ENCODE measurements at regions of chr14 and their contacts with region 1.

Region 1: DNA sequence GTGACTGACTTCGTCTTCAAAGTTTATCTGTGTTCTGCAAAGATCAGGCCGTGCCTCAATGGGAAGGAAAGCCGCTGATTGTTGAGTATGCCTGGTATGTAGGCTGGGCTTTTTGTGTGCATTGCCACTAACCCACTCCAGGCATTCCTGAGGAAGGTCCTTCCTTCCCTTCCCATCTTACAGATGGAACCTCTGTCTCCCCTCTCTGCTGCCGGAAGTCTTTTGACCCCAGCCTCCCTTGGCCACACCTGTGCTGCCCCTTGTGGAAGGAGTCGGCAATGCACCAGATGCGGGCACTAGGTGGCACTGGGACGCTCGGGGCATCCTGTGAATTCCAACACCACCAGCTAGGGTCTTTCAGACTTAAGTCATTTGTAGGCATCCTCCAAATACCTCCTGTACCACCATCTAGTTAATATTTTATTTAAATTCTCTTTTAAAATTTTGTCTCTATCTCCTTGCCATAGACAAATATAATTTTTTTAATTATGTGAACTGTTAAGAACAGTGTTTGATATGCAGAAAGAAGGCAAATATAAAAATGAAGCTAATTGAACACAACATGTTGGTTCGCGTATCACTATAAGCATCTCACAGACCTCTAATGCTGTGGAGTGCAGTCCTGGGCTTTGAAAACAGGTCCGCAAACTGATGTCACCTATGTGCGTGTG is 99.5 kb downstream of the RIN3 start:
- DNase-seq: peak; percentile 68
- ATAC-seq: no peak
- H3K4me3 ChIP-seq: no peak overlapping the region
- H3K4me3 Mint-ChIP-seq: peak overlapping the region; percentile 69
- H3K27ac ChIP-seq: peak overlapping the region in 1 of 2 donors; percentile 65
- H3K27ac Mint-ChIP-seq: peak overlapping the region; percentile 70
- H3K4me1 ChIP-seq: peaks cover 55 to 67% of the 10 kb centered on the region in 2 donors
- H3K4me1 Mint-ChIP-seq: peaks cover 73% of the 10 kb centered on the region
- H3K27me3 ChIP-seq: no peaks in the 10 kb centered on the region
- H3K27me3 Mint-ChIP-seq: no peaks in the 10 kb centered on the region
- CTCF ChIP-seq: peak; percentile 79

Region 2: DNA sequence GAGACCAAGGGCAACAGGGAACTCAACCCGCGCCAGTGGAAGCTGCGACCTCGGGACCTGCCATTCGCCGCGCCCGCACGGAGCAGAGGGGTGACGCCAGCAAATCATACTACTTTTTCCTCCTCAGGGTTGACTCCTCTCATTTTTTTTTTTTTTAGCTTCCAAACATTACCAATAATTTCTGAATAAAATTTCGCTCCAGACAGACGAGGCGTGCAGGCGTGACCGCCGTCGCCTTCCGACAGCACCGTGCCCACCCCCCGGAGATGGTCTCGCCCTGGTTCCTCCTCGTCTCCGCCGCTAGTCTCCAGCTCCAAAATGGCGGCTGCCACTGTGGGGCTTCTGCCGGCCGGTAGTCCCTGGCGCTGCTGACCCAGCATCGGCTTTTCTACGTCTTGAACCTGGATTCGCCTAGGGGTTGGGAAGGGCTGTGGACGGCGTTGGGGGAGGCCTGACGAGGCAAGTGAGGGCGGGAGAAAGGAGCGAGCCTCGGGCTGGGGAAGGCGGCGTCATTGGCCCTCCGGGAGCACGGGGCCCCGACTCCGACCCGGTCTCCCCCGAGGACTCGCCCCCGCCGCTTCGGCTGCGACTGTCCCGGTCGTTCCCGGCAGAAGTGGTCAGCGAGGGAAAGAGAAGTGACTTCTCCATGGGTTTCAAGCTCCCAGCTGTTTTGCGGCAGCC is 491.3 kb before region 1 on chr14 and contains the starts of genes CPSF2 and NDUFB1:
- CTCF ChIA-PET with region 1: no interaction called
- POLR2A ChIA-PET with region 1: no interaction called
- intact Hi-C with region 1: loop called (anchors 10 kb)
- DNase-seq: peak; percentile 94
- ATAC-seq: peak; percentile 89
- H3K4me3 ChIP-seq: peak within 1 kb of the TSS; percentile 85 to 99 (median 90)
- H3K4me3 Mint-ChIP-seq: peak within 1 kb of the TSS; percentile 97
- H3K27ac ChIP-seq: peak within 1 kb of the TSS; percentile 87 to 96
- H3K27ac Mint-ChIP-seq: peak within 1 kb of the TSS; percentile 100
- H3K4me1 ChIP-seq: peaks cover 9 to 29% of the 10 kb centered on the region in 2 donors
- H3K4me1 Mint-ChIP-seq: peaks cover 38% of the 10 kb centered on the region
- H3K27me3 ChIP-seq: no peaks in the 10 kb centered on the region
- H3K27me3 Mint-ChIP-seq: no peaks in the 10 kb centered on the region
- CTCF ChIP-seq: no peak
- total RNA-seq, gene CPSF2: 42.6 and 46.1 TPM in 2 replicates
- total RNA-seq, gene NDUFB1: 61.6 and 63.7 TPM in 2 replicates

Region 3: DNA sequence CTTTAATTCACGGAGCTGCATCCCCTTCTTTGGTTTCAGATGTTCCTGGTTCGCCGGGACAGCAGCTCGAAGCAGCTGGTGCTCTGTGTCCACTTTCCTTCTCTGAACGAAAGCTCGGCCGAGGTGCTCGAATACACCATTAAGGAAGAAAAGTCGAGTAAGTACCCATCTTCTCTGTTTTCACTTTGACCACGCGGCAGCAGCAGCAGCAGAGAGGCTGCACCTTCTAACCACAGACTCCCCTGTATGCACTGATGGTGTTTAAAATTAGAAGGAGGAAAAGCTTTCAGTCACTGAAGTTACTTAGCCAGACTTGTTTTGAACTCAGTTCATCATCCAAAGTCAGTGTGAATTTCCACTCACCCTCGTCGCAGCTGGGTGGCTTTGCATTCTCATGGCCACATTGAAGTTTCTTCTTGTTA is 35.8 kb before region 1 on chr14:
- CTCF ChIA-PET with region 1: interaction called, 3 read pairs
- POLR2A ChIA-PET with region 1: no interaction called
- intact Hi-C with region 1: loop called (anchors 5 kb)
- DNase-seq: peak; percentile 63
- ATAC-seq: peak; percentile 85
- H3K4me3 ChIP-seq: peak overlapping the region in 3 of 5 experiments; percentile 12 to 46 (median 36)
- H3K4me3 Mint-ChIP-seq: peak overlapping the region; percentile 71
- H3K27ac ChIP-seq: peak overlapping the region; percentile 42 to 63
- H3K27ac Mint-ChIP-seq: peak overlapping the region; percentile 79
- H3K4me1 ChIP-seq: peaks cover 31 to 48% of the 10 kb centered on the region in 2 donors
- H3K4me1 Mint-ChIP-seq: peaks cover 61% of the 10 kb centered on the region
- H3K27me3 ChIP-seq: no peaks in the 10 kb centered on the region
- H3K27me3 Mint-ChIP-seq: no peaks in the 10 kb centered on the region
- CTCF ChIP-seq: no peak

Region 4: DNA sequence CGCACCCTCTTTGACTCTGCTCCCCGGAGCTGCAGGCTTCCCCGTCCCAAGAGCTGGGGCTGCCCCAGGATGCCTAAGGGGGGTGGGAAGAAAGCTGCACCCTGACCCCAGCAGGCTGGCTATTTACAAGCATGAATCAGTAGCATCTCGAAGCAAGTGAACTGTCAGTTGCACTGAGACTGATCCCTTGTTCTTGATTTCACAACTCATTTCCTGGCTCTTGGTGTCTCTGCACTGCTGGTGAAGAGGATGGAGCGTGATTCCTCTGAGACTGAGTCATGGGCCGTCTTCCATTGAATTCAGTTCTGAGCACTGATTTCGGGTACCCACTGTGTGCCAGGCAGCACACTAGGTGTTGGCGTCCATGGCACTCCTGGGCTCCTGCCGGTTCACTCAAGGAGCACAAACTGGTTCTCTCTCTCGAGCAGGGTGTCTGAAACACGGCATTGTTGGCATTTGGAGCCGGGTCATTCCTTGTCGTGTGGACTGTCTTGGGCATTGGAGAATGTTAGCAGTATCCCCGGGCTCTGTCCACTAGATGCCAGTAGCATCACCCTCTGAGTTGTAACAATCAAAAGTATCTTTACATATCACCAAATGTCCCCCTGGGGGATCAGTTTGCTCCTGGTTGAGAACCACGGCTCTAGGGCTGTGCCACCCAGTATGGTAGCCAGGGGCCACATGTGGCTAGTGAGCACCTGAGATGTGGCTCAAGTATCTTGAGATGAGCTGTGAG is 12.6 kb before region 1 on chr14:
- CTCF ChIA-PET with region 1: interaction called, 26 read pairs
- POLR2A ChIA-PET with region 1: no interaction called
- intact Hi-C with region 1: no loop called
- DNase-seq: no peak
- ATAC-seq: no peak
- H3K4me3 ChIP-seq: no peak overlapping the region
- H3K4me3 Mint-ChIP-seq: no peak overlapping the region
- H3K27ac ChIP-seq: no peak overlapping the region
- H3K27ac Mint-ChIP-seq: peak overlapping the region; percentile 2
- H3K4me1 ChIP-seq: peaks cover 0 to 13% of the 10 kb centered on the region in 2 donors
- H3K4me1 Mint-ChIP-seq: peaks cover 38% of the 10 kb centered on the region
- H3K27me3 ChIP-seq: no peaks in the 10 kb centered on the region
- H3K27me3 Mint-ChIP-seq: no peaks in the 10 kb centered on the region
- CTCF ChIP-seq: no peak

Region 5: GRCh38 chr14:92651106-92651757 is 38.1 kb after region 1 on chr14:
- CTCF ChIA-PET with region 1: interaction called, 68 read pairs
- POLR2A ChIA-PET with region 1: interaction called, 16 read pairs
- intact Hi-C with region 1: loop called (anchors 1 kb)
- DNase-seq: peak; percentile 89
- ATAC-seq: peak; percentile 74
- H3K4me3 ChIP-seq: peak overlapping the region; percentile 1 to 91 (median 80)
- H3K4me3 Mint-ChIP-seq: peak overlapping the region; percentile 100
- H3K27ac ChIP-seq: peak overlapping the region; percentile 82 to 92
- H3K27ac Mint-ChIP-seq: peak overlapping the region; percentile 97
- H3K4me1 ChIP-seq: peaks cover 50 to 85% of the 10 kb centered on the region in 2 donors
- H3K4me1 Mint-ChIP-seq: peaks cover 71% of the 10 kb centered on the region
- H3K27me3 ChIP-seq: no peaks in the 10 kb centered on the region
- H3K27me3 Mint-ChIP-seq: no peaks in the 10 kb centered on the region
- CTCF ChIP-seq: no peak

Region 6: DNA sequence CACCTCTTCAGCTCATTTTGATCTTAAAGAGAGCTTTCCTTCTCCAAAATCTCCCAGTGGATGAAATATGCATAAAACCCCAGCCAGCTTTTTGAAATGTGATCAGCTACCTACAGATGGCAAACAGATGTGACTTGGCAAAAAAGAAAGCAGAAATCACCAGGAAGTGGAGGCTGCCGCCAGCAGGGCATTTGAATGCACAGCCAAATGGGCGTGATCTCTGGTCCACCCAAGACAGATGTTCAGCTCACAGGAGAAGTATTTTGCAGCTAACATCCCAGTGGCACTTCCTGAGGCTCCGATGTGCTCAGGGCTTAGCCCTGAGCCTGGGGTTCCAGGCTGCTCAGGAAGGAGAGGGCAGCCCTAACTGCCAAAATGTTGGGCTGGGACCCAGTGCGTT is 57.0 kb after region 1 on chr14:
- CTCF ChIA-PET with region 1: interaction called, 13 read pairs
- POLR2A ChIA-PET with region 1: no interaction called
- intact Hi-C with region 1: loop called (anchors 1 kb)
- DNase-seq: peak; percentile 50
- ATAC-seq: no peak
- H3K4me3 ChIP-seq: no peak overlapping the region
- H3K4me3 Mint-ChIP-seq: peak overlapping the region; percentile 33
- H3K27ac ChIP-seq: peak overlapping the region in 1 of 2 donors; percentile 29
- H3K27ac Mint-ChIP-seq: peak overlapping the region; percentile 75
- H3K4me1 ChIP-seq: peaks cover 53 to 74% of the 10 kb centered on the region in 2 donors
- H3K4me1 Mint-ChIP-seq: peaks cover 81% of the 10 kb centered on the region
- H3K27me3 ChIP-seq: no peaks in the 10 kb centered on the region
- H3K27me3 Mint-ChIP-seq: no peaks in the 10 kb centered on the region
- CTCF ChIP-seq: no peak

Region 7: GRCh38 chr14:92783816-92784431 is 170.8 kb after region 1 on chr14:
- CTCF ChIA-PET with region 1: interaction called, 3 read pairs
- POLR2A ChIA-PET with region 1: no interaction called
- intact Hi-C with region 1: loop called (anchors 10 kb)
- DNase-seq: peak; percentile 80
- ATAC-seq: peak; percentile 77
- H3K4me3 ChIP-seq: no peak overlapping the region
- H3K4me3 Mint-ChIP-seq: no peak overlapping the region
- H3K27ac ChIP-seq: no peak overlapping the region
- H3K27ac Mint-ChIP-seq: no peak overlapping the region
- H3K4me1 ChIP-seq: peaks cover 3 to 6% of the 10 kb centered on the region in 2 donors
- H3K4me1 Mint-ChIP-seq: peaks cover 15% of the 10 kb centered on the region
- H3K27me3 ChIP-seq: no peaks in the 10 kb centered on the region
- H3K27me3 Mint-ChIP-seq: no peaks in the 10 kb centered on the region
- CTCF ChIP-seq: peak; percentile 83

Region 8: DNA sequence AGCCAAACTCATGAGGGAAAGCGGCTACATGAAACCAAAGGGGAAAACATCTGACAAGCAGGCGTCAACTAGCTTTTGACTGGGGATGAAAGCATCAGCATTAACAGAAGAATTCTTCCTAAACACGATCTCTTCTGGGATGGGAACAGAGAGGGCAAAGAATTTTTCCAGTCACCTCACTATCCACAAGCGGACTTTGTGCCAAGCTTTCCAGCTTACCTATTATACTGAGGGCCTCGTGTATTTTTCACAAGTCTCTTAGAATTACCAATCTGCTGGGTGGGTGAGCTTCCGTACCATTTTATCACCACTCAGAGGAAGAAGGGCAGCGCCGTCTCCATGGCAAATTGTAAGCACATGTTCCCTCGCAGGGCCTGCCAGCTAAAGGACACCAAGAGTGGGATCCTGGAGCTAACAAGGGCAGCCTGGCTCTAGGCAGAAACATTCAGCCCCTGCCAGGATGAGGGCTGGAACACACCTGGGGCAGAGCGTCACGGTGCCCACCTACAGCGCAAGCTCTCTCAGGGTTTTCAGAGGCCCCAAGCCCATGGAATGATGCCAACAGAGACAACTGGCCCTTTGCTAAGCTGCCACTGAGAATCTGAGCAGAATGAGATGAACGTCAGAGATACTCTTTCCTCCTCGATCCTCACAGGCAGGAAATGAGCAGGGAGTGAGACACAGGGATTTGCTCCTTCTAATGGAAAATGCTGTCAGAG is 384.4 kb after region 1 on chr14:
- CTCF ChIA-PET with region 1: no interaction called
- POLR2A ChIA-PET with region 1: no interaction called
- intact Hi-C with region 1: no loop called
- DNase-seq: no peak
- ATAC-seq: no peak
- H3K4me3 ChIP-seq: no peak overlapping the region
- H3K4me3 Mint-ChIP-seq: no peak overlapping the region
- H3K27ac ChIP-seq: no peak overlapping the region
- H3K27ac Mint-ChIP-seq: no peak overlapping the region
- H3K4me1 ChIP-seq: no peaks in the 10 kb centered on the region
- H3K4me1 Mint-ChIP-seq: no peaks in the 10 kb centered on the region
- H3K27me3 ChIP-seq: no peaks in the 10 kb centered on the region
- H3K27me3 Mint-ChIP-seq: no peaks in the 10 kb centered on the region
- CTCF ChIP-seq: no peak